ENCODE measurements at regions of chr7 and their contacts with region 1.

Region 1: GRCh38 chr7:1159891-1160668 is at the start of gene ZFAND2A:
- DNase-seq: peak; percentile 99
- H3K4me3 ChIP-seq: peak within 1 kb of the TSS; percentile 65
- H3K4me3 Mint-ChIP-seq: peak within 1 kb of the TSS; percentile 72
- H3K27ac Mint-ChIP-seq: peak within 1 kb of the TSS; percentile 83
- H3K4me1 ChIP-seq: peaks cover 21% of the 10 kb centered on the region
- H3K4me1 Mint-ChIP-seq: peaks cover 6% of the 10 kb centered on the region
- H3K27me3 ChIP-seq: no peaks in the 10 kb centered on the region
- H3K27me3 Mint-ChIP-seq: no peaks in the 10 kb centered on the region
- CTCF ChIP-seq: no peak
- total RNA-seq, gene ZFAND2A: 32.1 and 33.6 TPM in 2 replicates

Region 2: DNA sequence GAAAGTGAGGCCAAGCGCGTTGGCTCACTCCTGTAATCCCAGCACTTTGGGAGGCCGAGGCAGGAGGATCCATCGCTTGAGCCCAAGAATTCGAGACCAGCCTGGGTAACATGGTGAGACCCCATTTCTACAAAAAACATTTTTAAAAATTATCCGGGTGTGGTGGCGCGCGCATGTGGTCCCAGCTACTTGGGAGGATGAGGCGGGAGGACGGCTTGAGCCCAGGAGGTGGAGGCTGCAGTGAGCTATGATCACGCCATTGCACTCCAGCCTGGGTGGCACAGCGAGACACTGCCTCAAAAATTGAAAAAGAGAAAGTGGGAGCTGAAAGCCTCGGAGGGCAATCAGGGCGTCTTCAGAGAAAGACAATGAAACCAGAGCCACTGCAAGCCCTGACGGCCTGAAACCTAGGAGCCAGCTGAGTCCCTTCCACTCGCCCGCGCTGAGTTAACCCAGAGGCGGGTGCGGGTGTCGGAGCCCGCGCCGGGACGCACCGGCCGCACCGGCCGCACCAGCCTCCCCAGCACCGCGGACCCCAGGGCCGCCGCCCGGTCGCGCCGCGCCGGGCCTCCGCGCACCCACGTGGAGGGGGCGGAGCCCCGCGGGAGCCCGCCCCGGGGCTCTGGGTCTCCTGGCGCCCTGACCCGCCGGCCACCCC is 22.4 kb before region 1 on chr7:
- CTCF ChIA-PET with region 1: interaction called, 14 read pairs
- POLR2A ChIA-PET with region 1: interaction called, 10 read pairs
- intact Hi-C with region 1: loop called (anchors 1 kb)
- DNase-seq: peak in 1 of 2 experiments; percentile 26
- H3K4me3 ChIP-seq: peak overlapping the region; percentile 98
- H3K4me3 Mint-ChIP-seq: peak overlapping the region; percentile 72
- H3K27ac Mint-ChIP-seq: peak overlapping the region; percentile 96
- H3K4me1 ChIP-seq: peaks cover 4% of the 10 kb centered on the region; the same call in 1 of the 2 replicates
- H3K4me1 Mint-ChIP-seq: peaks cover 11% of the 10 kb centered on the region
- H3K27me3 ChIP-seq: no peaks in the 10 kb centered on the region
- H3K27me3 Mint-ChIP-seq: no peaks in the 10 kb centered on the region
- CTCF ChIP-seq: no peak

Region 3: DNA sequence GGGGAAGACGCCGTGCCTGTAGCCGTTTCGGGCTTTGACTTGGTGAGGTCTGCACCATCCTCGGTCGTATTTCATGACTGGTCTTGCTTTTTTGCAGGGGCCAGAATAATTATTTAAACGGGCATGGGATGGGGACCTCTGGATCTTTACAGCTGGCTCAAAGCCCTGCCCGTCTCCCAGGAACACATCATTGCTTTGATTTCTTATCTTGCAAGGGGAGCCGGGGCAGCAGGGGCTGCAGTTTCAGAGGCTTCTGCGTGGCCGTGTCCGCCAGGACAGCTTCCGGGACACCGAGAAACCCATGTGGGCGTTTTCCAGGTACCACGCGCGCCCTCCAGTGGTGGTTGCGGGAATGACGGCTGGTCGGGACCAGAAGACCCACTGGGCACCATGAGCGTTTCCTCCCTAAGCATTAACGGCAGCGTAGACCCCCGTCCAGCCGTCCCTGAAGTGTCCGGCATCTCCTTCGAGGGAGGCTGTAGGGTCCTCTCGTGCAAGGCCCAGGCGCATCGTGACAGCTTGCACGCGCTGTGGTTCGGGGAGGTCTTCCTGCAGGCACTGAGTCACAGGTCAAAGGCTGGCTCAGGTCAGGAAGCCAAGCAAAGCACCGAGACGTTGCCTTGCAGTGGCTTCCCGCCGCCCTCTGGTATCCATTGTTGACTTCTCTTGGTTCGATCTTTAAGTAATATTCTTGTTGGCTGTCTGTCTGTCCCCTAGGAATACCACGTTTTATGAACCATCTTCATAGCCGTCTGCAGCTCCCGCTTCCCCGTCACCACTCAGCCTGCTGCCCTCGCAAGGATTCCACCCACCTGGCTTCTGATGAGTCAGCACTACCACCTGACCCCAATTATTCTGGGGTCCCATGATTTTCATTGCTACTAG is 16.1 kb after region 1 on chr7:
- CTCF ChIA-PET with region 1: interaction called, 14 read pairs
- POLR2A ChIA-PET with region 1: no interaction called
- intact Hi-C with region 1: loop called (anchors 1 kb)
- DNase-seq: peak; percentile 87 to 93
- H3K4me3 ChIP-seq: peak overlapping the region; percentile 40
- H3K4me3 Mint-ChIP-seq: peak overlapping the region; percentile 74
- H3K27ac Mint-ChIP-seq: peak overlapping the region; percentile 64
- H3K4me1 ChIP-seq: peaks cover 11% of the 10 kb centered on the region
- H3K4me1 Mint-ChIP-seq: no peaks in the 10 kb centered on the region
- H3K27me3 ChIP-seq: no peaks in the 10 kb centered on the region
- H3K27me3 Mint-ChIP-seq: no peaks in the 10 kb centered on the region
- CTCF ChIP-seq: peak; percentile 95 to 97

Region 4: DNA sequence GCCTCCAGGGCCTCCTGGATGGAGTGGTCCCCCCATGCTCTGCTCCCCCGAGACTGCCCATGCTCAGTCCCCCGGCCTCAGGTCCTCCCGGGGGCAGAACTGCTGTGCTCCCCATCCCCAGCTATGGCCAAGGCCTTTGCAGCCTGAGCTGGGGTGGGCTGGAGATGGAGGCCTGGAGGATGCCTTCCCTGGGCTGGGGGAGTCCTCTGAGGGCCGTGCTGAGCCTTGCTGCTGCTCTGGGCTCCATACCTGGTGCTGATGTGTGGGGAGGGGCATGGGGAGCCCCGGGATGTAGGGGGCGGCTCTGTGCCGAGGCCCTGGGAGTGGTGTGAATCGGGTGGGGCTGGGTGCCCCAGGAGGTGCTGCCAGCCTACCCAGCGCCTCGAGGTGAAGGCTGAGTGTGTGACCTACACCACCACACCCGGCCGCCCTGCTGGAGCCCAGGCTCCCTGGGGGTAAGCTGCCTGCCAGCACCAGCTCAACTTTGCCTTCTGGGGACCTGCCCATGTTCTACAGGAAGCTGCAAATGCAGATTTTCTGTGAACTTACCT is 182.1 kb after region 1 on chr7:
- CTCF ChIA-PET with region 1: no interaction called
- POLR2A ChIA-PET with region 1: no interaction called
- intact Hi-C with region 1: no loop called
- DNase-seq: no peak
- H3K4me3 ChIP-seq: no peak overlapping the region
- H3K4me3 Mint-ChIP-seq: no peak overlapping the region
- H3K27ac Mint-ChIP-seq: no peak overlapping the region
- H3K4me1 ChIP-seq: no peaks in the 10 kb centered on the region
- H3K4me1 Mint-ChIP-seq: no peaks in the 10 kb centered on the region
- H3K27me3 ChIP-seq: no peaks in the 10 kb centered on the region; the same call in 1 of the 2 replicates
- H3K27me3 Mint-ChIP-seq: peaks cover 12% of the 10 kb centered on the region
- CTCF ChIP-seq: no peak

Region 5: DNA sequence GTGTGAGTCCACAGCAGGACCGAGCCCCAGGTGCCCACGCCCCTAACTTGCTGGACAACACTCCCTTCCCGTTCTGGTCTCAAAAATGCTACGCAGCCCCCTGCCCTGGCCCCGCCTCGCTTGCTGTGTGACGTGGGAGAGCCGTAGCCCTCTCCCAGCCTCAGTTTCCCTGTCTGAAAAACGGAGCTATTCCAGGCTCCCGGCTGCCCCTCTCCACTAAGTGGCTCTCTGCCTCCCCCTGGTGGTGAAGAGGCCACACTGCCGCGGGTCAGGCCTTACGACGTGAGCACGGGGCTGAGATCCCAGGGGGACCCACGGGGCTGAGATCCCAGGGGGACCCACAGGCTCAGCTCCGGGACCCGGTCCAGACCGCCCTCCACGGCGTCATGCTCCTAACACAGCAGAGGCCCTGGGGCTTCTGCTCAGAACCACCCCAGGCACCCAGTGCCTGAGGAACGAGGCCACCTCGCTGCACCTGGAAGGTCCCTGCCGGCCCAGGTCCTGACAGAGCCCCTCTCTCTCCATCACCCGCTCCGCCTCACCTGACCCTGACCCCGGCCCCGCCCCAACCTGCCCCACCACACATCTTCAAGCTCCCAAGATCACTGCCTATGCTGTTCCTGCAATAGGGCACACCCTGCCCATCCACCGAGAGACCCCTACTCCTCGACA is 272.5 kb after region 1 on chr7:
- CTCF ChIA-PET with region 1: no interaction called
- POLR2A ChIA-PET with region 1: no interaction called
- intact Hi-C with region 1: no loop called
- DNase-seq: peak; percentile 72 to 84
- H3K4me3 ChIP-seq: no peak overlapping the region
- H3K4me3 Mint-ChIP-seq: peak overlapping the region; percentile 5
- H3K27ac Mint-ChIP-seq: no peak overlapping the region
- H3K4me1 ChIP-seq: peaks cover 14% of the 10 kb centered on the region; the same call in 1 of the 2 replicates
- H3K4me1 Mint-ChIP-seq: peaks cover 6% of the 10 kb centered on the region
- H3K27me3 ChIP-seq: no peaks in the 10 kb centered on the region
- H3K27me3 Mint-ChIP-seq: peaks cover 2% of the 10 kb centered on the region
- CTCF ChIP-seq: peak; percentile 95 to 97

Measured in Caco-2 (cell line).